ENCODE measurements at regions of chr20 and their contacts with region 1.

Region 1: DNA sequence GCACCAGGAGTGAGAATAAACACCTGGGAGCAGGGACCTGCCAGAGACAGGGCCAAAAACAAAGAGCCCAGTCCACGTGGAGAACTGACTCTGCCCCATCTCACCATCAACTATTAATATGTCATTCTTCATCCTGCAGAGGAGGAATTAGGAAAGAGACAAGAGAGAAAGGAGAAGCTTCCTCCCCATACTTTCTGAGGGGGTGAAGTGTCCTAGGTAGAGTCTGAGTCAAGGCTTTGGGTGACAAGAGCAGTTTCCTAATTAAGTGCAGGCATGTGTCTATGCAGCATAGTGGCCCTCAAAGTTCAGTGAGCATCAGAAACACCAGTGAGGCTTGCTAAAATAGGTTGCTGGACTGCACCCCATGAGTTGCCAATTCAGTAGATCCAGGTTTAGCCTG is 40.7 kb upstream of the BMP2 start:
- DNase-seq: no peak
- ATAC-seq: no peak
- H3K4me3 ChIP-seq: no peak overlapping the region
- H3K27ac ChIP-seq: no peak overlapping the region
- H3K4me1 ChIP-seq: peaks cover 5% of the 10 kb centered on the region; the same call in 1 of the 2 replicates
- H3K27me3 ChIP-seq: peaks cover 31% of the 10 kb centered on the region
- CTCF ChIP-seq: no peak

Region 2: DNA sequence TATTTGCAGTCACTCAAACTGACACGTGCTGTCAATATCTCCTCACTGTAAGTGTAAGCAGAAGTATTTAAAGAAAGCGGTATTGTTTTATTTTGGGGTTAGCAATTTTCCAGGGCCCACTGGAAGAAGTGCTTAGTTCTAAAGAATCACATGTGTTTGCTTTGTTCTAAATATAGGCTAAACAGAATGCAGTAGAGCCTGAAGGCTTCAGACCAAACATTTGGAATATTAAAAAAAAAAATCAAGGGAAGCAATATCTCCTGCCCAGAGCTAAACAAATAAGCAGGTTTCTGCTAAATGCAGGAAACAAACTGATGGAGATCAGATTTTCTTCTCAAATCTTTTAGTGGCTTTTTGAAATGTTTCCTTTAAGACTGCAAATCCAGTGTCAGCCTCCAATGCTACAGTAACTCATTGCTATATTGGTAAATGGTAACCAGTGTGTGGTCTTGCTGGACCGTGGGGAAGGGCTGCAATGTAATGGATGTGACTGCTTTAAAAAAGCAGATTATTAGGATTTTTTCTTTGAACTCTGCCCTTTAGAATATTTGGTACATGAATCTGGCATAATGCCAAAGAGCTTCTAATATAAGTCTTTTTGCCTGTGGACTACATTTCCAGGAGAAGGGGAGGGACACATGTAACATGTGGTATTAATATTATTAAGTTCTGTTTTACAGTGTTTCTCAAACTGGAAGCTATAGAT is 286.9 kb before region 1 on chr20:
- CTCF ChIA-PET with region 1: interaction called, 11 read pairs
- POLR2A ChIA-PET with region 1: no interaction called
- intact Hi-C with region 1: no loop called
- DNase-seq: no peak
- ATAC-seq: no peak
- H3K4me3 ChIP-seq: no peak overlapping the region
- H3K27ac ChIP-seq: no peak overlapping the region
- H3K4me1 ChIP-seq: no peaks in the 10 kb centered on the region
- H3K27me3 ChIP-seq: peaks cover 3% of the 10 kb centered on the region; the same call in 1 of the 2 replicates
- CTCF ChIP-seq: no peak

Region 3: DNA sequence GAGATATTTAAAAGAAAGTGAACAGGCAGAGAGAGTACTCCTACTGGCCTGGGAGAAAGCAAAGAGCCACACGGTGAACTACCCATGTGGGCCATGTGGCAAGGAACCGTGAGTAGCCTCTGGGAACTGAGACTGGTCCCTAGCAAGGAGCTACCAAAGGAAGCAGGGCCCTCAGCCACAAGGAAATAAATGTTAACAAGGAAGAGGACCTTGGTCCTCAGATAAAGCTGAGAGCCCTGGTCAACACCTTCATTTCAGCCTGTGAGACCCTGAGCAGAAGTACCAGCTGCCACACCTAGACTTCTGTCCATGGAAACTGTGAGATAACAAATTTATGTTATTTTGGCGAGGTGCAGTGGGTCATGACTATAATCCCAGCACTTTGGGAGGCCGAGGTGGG is 66.0 kb after region 1 on chr20:
- CTCF ChIA-PET with region 1: no interaction called
- POLR2A ChIA-PET with region 1: no interaction called
- intact Hi-C with region 1: no loop called
- DNase-seq: no peak
- ATAC-seq: no peak
- H3K4me3 ChIP-seq: no peak overlapping the region
- H3K27ac ChIP-seq: no peak overlapping the region
- H3K4me1 ChIP-seq: no peaks in the 10 kb centered on the region
- H3K27me3 ChIP-seq: peaks cover 98% of the 10 kb centered on the region
- CTCF ChIP-seq: no peak

Measured in PC-3 (cell line).